Right ventricle myocardium superior (tissue), 1 donor: ENCODE measurements at regions of chr5 and their contacts with region 1.

Region 1: GRCh38 chr5:71461360-71461759 is 5.9 kb downstream of the BDP1 start:
- DNase-seq: no peak
- ATAC-seq: no peak

Region 2: GRCh38 chr5:71522151-71522550 is 60.8 kb after region 1 on chr5:
- intact Hi-C with region 1: loop called (anchors 10 kb)
- DNase-seq: no peak
- ATAC-seq: no peak

Region 3: GRCh38 chr5:71533614-71534013 is 72.3 kb after region 1 on chr5:
- intact Hi-C with region 1: no loop called
- DNase-seq: no peak
- ATAC-seq: peak; percentile 73

Region 4: DNA sequence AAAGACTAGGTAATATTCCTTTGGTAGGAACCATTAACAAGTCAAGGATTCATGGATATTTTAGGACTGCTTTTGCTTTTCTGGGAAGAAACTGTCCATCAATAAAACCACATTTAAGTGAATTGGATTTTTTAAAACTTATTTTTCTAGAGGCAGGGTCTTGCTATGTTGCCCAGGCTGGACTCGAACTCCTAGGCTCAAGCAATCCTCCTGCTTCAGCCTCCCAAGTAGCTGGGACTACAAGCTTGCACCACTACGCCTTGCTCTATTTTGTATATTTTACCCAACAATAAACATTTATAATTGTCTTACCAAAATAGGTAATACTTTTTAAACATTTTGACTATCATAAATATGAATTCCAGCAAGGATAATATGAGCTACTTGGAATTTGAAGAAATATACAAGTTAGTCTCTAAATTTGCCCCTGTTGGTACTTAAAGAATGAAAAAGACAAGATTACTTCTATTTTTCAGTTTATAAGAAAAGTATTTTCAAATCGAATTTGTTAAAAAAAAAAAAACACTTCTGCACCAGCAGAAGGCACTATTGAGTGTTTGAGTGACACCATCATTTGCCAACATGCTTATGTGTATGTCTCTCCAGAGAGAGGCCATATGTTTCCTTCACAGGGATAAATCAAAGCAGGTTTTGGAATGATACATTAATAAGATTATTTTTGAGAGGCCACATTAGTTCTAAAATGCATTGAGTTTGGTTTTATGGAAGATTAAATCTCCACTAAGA is 197.7 kb after region 1 on chr5:
- intact Hi-C with region 1: no loop called
- DNase-seq: no peak
- ATAC-seq: no peak